HepG2 (cell line): ENCODE measurements at regions of chr16 and their contacts with region 1.

Region 1: DNA sequence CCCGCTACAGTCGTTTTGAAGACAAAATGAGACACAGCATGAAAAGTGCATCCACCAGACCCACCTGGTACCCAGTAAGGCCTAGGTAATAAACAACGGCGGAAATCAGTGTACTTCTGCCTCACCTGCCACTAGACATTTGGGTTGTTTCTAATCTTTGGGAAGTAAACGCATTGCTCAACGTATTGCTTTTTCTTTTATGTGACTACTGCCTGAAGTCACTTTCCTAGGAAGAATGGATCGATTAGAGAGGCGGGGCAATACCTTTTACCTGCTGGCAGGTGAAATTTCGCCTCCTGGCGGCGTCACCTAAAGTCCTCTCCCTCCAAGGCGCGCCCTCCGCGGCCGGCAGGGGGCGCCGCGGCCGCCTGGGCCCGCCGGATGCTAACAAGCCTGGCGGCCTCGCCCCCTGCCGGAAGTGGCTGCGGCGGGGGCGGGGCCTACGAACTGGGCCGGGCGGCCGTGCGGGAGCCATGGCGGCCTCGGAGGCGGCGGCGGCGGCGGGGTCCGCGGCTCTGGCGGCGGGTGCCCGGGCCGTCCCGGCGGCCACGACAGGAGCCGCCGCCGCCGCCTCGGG is at the start of gene ATMIN:
- DNase-seq: peak; percentile 83
- ATAC-seq: peak; percentile 91
- H3K4me3 ChIP-seq: peak within 1 kb of the TSS; percentile 87 to 93 (median 87)
- H3K27ac ChIP-seq: peak within 1 kb of the TSS; percentile 60
- H3K4me1 ChIP-seq: peaks cover 22% of the 10 kb centered on the region
- H3K27me3 ChIP-seq: no peaks in the 10 kb centered on the region; a peak in 1 of 5 replicates
- CTCF ChIP-seq: peak; percentile 90
- EP300 ChIP-seq: peak in 1 of 2 experiments; percentile 52; a peak in 1 of 4 replicates
- POLR2A ChIP-seq: peak in 1 of 2 experiments; percentile 68; a peak in 2 of 4 replicates
- RAD21 ChIP-seq: peak; percentile 96
- total RNA-seq, gene ATMIN: 60.4 and 74.7 TPM in 2 replicates

Region 2: GRCh38 chr16:80974649-80975376 is 60.7 kb before region 1 on chr16:
- CTCF ChIA-PET with region 1: interaction called, 12 read pairs
- POLR2A ChIA-PET with region 1: no interaction called
- in situ Hi-C with region 1: no loop called
- intact Hi-C with region 1: no loop called
- DNase-seq: no peak
- ATAC-seq: peak; percentile 71
- H3K4me3 ChIP-seq: no peak overlapping the region
- H3K27ac ChIP-seq: no peak overlapping the region
- H3K4me1 ChIP-seq: no peaks in the 10 kb centered on the region
- H3K27me3 ChIP-seq: no peaks in the 10 kb centered on the region
- CTCF ChIP-seq: peak; percentile 30
- EP300 ChIP-seq: no peak
- POLR2A ChIP-seq: no peak
- RAD21 ChIP-seq: no peak

Region 3: DNA sequence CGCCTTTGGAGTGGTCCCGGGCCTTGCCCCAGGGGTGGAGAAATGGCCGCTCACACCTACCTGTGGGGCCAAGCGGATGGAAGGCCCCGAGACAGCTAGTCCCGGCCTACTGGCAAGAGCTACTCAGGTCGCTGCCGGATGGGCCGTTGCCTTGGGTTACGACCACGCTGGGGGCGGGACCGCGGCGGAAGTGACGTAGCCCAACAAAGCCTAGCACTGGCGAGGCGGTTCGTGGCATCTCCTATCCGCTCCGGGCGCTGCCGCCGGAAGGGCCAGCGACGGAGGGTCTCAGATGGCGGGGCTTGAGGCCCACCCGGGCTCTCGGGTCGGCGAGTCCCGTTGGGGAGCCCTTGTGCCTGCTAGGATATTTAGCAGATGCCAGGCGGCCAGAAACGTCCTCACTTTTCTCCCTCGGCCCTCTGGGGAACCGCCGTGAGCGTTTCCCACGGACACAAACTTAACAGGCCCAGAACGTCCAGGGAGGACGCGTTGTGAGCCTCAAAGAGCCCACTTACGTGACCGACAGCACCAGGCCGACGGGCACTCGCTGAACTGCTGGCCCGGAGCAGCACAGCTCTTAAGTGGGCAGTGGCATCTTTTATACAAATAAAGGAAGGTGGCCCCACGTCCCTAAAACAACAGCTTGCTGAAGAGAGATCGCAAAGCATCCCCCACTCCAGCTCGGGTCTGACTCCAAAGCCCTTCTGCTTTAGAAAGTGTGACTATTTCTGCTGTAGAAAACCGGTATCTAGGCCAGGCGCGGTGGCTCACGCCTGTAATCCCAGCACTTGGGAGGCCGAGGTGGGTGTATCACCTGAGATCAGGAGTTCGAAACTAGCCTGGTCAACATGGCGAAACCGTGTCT is 41.8 kb after region 1 on chr16 and contains the start of gene C16orf46:
- CTCF ChIA-PET with region 1: interaction called, 7 read pairs
- POLR2A ChIA-PET with region 1: interaction called, 21 read pairs
- in situ Hi-C with region 1: no loop called
- intact Hi-C with region 1: loop called (anchors 1 kb)
- DNase-seq: peak; percentile 96
- ATAC-seq: peak; percentile 96
- H3K4me3 ChIP-seq: peak within 1 kb of the TSS; percentile 81 to 85 (median 81)
- H3K27ac ChIP-seq: peak within 1 kb of the TSS; percentile 85
- H3K4me1 ChIP-seq: peaks cover 15% of the 10 kb centered on the region
- H3K27me3 ChIP-seq: no peaks in the 10 kb centered on the region; a peak in 1 of 5 replicates
- CTCF ChIP-seq: 0 out of 2 replicates have a peak, but pooled peaks have one; percentile 35
- EP300 ChIP-seq: 0 out of 4 replicates have a peak, but pooled peaks of 1 of the 2 experiments have one; percentile 43
- POLR2A ChIP-seq: peak; percentile 93 to 97
- RAD21 ChIP-seq: peak; percentile 37
- total RNA-seq, gene C16orf46: 0.38 and 1.9 TPM in 2 replicates

Region 4: GRCh38 chr16:81088836-81089235 is 53.4 kb after region 1 on chr16:
- CTCF ChIA-PET with region 1: no interaction called
- POLR2A ChIA-PET with region 1: no interaction called
- in situ Hi-C with region 1: no loop called
- intact Hi-C with region 1: no loop called
- DNase-seq: no peak
- ATAC-seq: no peak
- H3K4me3 ChIP-seq: no peak overlapping the region
- H3K27ac ChIP-seq: no peak overlapping the region
- H3K4me1 ChIP-seq: peaks cover 33% of the 10 kb centered on the region
- H3K27me3 ChIP-seq: no peaks in the 10 kb centered on the region
- CTCF ChIP-seq: no peak
- EP300 ChIP-seq: no peak
- POLR2A ChIP-seq: no peak
- RAD21 ChIP-seq: no peak

Region 5: GRCh38 chr16:81140930-81141780 is 105.7 kb after region 1 on chr16:
- CTCF ChIA-PET with region 1: no interaction called
- POLR2A ChIA-PET with region 1: no interaction called
- in situ Hi-C with region 1: no loop called
- intact Hi-C with region 1: loop called (anchors 10 kb)
- DNase-seq: peak; percentile 82
- ATAC-seq: peak; percentile 84
- H3K4me3 ChIP-seq: peak overlapping the region; percentile 40 to 72 (median 50)
- H3K27ac ChIP-seq: peak overlapping the region; percentile 60
- H3K4me1 ChIP-seq: peaks cover 57% of the 10 kb centered on the region
- H3K27me3 ChIP-seq: 0 out of 5 replicates have a peak, but pooled peaks cover 0 to 8% of the 10 kb centered on the region in 2 experiments
- CTCF ChIP-seq: peak; percentile 84
- EP300 ChIP-seq: peak in 1 of 2 experiments; percentile 47; a peak in 1 of 4 replicates
- POLR2A ChIP-seq: peak in 1 of 2 experiments; percentile 57; a peak in 2 of 4 replicates
- RAD21 ChIP-seq: peak; percentile 44; the same call in 1 of the 2 replicates

Region 6: DNA sequence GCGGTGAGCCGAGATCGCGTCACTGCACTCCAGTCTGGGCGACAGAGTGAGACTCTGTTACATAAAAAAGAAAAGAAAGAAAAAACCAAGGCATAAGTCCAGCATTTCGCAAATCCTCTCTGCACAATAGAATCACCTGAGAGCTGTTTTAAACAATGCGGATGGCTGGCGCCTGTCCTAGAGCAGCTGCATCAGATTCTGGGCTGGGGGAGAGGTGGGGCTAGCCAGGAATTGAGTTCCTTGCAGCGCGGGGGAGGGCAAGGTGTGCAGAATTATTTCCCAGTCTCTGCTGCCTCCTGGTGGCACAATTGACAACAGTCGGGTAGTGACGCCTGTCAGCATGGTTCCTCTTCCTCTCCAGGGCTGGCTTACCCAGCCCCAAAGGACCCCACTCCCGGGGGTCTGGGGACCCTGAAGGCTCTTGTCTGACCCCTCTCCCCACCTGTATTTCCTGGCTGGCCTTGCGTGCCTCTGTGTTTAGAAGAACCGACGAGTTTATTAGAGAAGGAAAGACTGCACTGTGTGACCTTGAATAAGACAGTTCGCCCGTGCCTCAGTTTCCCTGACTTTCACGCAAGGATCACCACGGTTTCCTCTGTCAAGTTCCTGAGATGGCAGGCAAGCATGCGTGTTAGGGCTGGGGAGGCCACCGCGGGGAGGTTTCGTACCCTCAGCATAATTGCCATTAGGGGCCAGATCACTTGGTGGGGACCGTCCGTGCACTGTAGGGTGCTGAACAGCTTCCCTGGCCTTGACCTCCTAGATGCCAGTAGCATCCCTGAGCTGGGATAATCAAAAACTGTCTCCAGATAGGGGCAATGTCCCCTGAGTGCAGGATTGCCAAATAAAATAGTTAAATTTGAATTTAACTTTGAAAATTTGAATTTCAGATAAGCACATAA is 702.6 kb after region 1 on chr16:
- CTCF ChIA-PET with region 1: interaction called, 5 read pairs
- POLR2A ChIA-PET with region 1: no interaction called
- in situ Hi-C with region 1: loop called (anchors 25 kb)
- intact Hi-C with region 1: loop called (anchors 5 kb)
- DNase-seq: peak; percentile 74
- ATAC-seq: peak; percentile 92
- H3K4me3 ChIP-seq: peak overlapping the region in 2 of 3 experiments; percentile 3 to 60; a peak in 4 of 6 replicates
- H3K27ac ChIP-seq: no peak overlapping the region
- H3K4me1 ChIP-seq: peaks cover 16% of the 10 kb centered on the region
- H3K27me3 ChIP-seq: peaks cover 0 to 31% of the 10 kb centered on the region in 2 experiments; a peak in 4 of 5 replicates
- CTCF ChIP-seq: peak; percentile 94
- EP300 ChIP-seq: no peak
- POLR2A ChIP-seq: no peak
- RAD21 ChIP-seq: peak; percentile 89